Motor neuron (in vitro differentiated cells): ENCODE measurements at regions of chr3 and their contacts with region 1.

Region 1: DNA sequence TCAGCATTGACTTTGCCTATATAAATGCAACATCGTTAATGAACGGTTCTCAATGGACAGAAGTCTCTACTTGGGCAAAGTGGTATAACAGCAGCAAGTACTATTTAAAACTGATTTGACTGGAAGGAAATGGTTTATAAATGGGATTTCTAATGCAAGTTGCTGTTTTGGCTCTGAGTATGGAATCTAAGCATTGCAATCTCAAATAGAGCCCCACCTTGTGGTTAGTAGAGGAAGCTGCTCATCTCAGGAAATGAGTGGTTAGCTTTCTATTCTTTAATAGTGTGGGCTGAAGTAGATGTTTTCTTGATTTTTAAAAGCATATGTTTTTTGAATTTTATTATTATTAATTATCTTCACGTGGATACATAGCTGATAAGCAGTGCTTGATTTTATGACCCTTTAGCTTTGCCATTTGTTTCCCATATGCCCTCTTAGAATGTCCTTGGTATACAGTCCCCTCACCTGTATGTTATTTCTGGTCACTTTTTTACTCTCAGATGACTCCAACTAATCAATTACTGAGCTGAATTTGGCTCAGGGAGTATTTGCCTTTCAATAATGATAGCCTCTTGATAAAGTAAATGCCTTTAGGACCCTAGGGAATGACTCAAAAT is 67.1 kb downstream of the OXSM start:
- ATAC-seq: peak in 4 of 8 experiments; percentile 28 to 78 (median 77)
- H3K4me3 ChIP-seq: no peak overlapping the region
- H3K27ac ChIP-seq: no peak overlapping the region
- H3K4me1 ChIP-seq: peaks cover 0 to 7% of the 10 kb centered on the region in 2 donors

Region 2: DNA sequence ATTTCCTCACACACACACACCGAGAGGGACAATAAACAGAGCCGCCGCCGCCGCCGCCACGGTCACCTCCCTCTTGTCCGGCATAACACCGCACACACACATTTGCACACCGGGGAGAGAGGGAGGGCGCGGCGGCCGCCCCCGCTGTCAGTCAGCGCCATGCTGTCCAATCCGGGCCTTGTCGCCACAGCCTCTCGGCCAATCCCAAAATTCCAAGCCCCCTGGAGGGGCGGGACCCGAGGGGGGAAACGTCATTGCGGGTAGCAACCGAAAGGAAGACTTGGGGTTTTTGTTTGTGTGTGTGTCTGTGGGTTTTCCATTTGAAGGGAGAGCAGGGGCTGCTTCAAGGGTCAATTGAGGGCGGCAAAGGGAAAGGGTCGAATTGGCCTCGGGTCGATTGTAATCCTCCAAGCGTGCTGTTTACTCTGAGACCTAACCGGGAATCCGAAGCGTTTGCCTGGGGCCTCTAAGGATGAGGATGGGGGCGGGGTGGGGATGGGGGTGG is 192.1 kb before region 1 on chr3 and contains the start of gene TOP2B:
- in situ Hi-C with region 1: loop called in 1 of 9 experiments (anchors 25 kb)
- ATAC-seq: peak; percentile 90 to 97 (median 94)
- H3K4me3 ChIP-seq: peak within 1 kb of the TSS; percentile 67 to 96 (median 84)
- H3K27ac ChIP-seq: peak within 1 kb of the TSS; percentile 94 to 95
- H3K4me1 ChIP-seq: peaks cover 10 to 20% of the 10 kb centered on the region in 2 donors
- total RNA-seq, gene TOP2B: 149 to 271 (median 208) TPM

Region 3: DNA sequence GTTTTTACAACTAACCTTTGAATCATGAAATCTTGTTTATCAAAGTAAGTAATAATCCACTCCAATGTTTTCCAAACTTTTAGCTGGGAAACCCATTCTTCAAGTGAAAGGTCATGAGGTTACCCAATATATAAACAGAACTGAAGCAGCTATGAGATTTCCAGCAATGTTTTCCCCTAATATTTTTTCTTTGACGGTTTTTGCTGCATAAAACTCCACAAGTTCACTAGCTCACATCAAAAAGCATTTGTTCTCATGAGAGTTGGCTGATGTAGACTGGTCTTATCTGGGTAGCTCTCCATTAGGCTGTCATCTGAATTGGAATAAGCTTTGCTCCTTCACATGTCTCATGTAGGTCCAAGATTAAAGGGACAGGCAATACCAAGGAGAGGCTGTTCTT is 524.4 kb after region 1 on chr3:
- in situ Hi-C with region 1: no loop called
- ATAC-seq: no peak
- H3K4me3 ChIP-seq: no peak overlapping the region
- H3K27ac ChIP-seq: no peak overlapping the region
- H3K4me1 ChIP-seq: no peaks in the 10 kb centered on the region

Region 4: GRCh38 chr3:26712211-26713026 is 855.4 kb after region 1 on chr3:
- in situ Hi-C with region 1: loop called in 2 of 9 experiments (anchors 25 kb)
- ATAC-seq: peak; percentile 52 to 81 (median 64)
- H3K4me3 ChIP-seq: no peak overlapping the region
- H3K27ac ChIP-seq: no peak overlapping the region
- H3K4me1 ChIP-seq: no peaks in the 10 kb centered on the region